Activated naive CD4-positive, alpha-beta T cell treated with anti-CD3 and anti-CD28 coated beads for 36 hours (primary cell): ENCODE measurements at regions of chr11 and their contacts with region 1.

Region 1: GRCh38 chr11:9613118-9613829 is 39.8 kb downstream of the WEE1 start:
- DNase-seq: peak; percentile 94
- H3K4me3 Mint-ChIP-seq: peak overlapping the region; percentile 86
- H3K27ac Mint-ChIP-seq: peak overlapping the region; percentile 98
- H3K4me1 Mint-ChIP-seq: peaks cover 38% of the 10 kb centered on the region
- H3K27me3 Mint-ChIP-seq: no peaks in the 10 kb centered on the region

Region 2: DNA sequence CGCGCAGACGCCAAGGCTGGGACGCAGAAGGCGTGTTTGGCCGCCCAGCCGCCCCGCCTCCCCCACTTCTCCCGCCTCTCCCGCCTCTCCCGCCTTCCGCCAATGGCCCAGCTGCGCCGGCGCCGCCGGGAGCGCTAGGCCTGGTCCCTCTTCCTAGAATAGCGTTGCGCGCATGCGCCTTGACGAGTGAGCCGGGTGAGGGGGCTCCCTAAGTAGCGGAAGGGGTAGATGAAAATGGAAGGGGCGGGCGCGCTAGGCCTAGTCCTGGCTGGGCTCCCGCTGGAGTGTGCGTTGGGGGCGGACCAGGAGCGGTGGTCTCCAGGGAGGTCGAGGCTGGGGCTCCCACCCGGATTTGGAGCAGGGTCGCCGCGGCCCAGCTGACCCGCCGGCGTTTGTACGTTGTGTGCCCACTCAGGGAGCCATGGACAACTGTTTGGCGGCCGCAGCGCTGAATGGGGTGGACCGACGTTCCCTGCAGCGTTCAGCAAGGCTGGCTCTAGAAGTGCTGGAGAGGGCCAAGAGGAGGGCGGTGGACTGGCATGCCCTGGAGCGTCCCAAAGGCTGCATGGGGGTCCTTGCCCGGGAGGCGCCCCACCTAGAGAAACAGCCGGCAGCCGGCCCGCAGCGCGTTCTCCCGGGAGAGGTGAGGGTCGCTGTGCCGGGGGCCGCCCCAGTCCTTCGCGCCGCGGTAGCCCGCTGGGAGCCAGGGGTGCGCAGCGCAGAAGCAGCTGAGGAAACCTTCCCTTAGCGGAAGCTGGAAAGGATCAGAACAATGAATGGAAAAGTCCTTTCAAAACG is 702.0 kb before region 1 on chr11 and contains the start of gene AKIP1:
- CTCF ChIA-PET with region 1: no interaction called
- intact Hi-C with region 1: loop called (anchors 5 kb)
- DNase-seq: peak; percentile 91
- H3K4me3 Mint-ChIP-seq: peak within 1 kb of the TSS; percentile 92
- H3K27ac Mint-ChIP-seq: peak within 1 kb of the TSS; percentile 86
- H3K4me1 Mint-ChIP-seq: peaks cover 44% of the 10 kb centered on the region
- H3K27me3 Mint-ChIP-seq: no peaks in the 10 kb centered on the region
- total RNA-seq, gene AKIP1: 41.5 to 43.9 TPM

Region 3: DNA sequence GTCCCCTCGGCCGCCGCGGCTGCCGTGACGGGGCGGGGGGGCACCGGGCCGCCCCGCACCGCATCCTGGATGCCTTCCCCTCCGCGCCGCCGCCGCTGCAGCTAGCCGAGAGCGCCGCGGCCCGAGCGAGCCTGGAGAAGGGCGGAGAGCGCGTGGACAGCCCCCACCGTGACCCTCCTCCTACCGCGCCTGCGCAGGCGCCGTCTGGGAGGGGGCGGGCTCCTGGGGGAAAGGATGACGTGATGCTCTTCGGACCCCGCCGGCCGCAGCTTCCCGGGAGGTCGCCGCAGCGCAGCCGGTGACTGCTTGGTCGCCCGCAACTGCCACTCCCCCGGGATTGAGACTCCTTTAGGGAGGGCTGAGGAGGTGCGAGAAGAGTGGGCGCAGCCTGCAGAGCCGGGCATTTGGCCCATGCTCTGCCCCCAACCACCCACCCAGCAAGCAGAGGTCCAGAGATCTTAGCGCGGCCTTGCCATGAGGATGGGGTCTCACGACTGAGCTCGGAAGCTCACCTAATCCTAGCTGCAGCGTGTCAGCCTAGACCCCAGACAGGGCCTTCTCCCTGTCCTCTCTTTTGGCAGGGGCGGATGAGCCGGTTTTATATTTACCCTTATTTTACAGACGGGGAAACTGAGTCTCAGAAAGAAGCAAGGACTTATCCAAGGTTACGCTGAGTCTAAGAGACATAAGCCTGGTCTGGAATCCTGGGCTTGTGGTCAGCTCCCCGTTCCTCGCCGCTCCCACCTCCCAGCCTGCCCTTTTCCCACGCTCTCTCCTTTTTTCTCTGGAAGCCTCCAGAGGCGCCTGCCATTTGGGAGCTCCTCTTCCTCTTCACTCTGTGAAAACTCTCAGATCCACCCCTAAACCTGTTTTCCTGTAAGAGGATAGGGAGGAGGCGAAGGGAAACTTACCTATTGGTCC is 347.8 kb before region 1 on chr11 and contains the start of gene DENND5A:
- CTCF ChIA-PET with region 1: no interaction called
- intact Hi-C with region 1: loop called (anchors 2 kb)
- DNase-seq: peak; percentile 62
- H3K4me3 Mint-ChIP-seq: peak within 1 kb of the TSS; percentile 84
- H3K27ac Mint-ChIP-seq: peak within 1 kb of the TSS; percentile 95
- H3K4me1 Mint-ChIP-seq: peaks cover 30% of the 10 kb centered on the region
- H3K27me3 Mint-ChIP-seq: peaks cover 3% of the 10 kb centered on the region
- total RNA-seq, gene DENND5A: 62.3 to 63.5 TPM

Region 4: GRCh38 chr11:9498457-9499078 is 114.7 kb before region 1 on chr11:
- CTCF ChIA-PET with region 1: no interaction called
- intact Hi-C with region 1: no loop called
- DNase-seq: no peak
- H3K4me3 Mint-ChIP-seq: no peak overlapping the region
- H3K27ac Mint-ChIP-seq: no peak overlapping the region
- H3K4me1 Mint-ChIP-seq: no peaks in the 10 kb centered on the region
- H3K27me3 Mint-ChIP-seq: no peaks in the 10 kb centered on the region

Region 5: GRCh38 chr11:9565822-9566560 is 47.3 kb before region 1 on chr11:
- CTCF ChIA-PET with region 1: interaction called, 3 read pairs
- intact Hi-C with region 1: loop called (anchors 1 kb)
- DNase-seq: peak; percentile 81
- H3K4me3 Mint-ChIP-seq: no peak overlapping the region
- H3K27ac Mint-ChIP-seq: peak overlapping the region; percentile 65
- H3K4me1 Mint-ChIP-seq: peaks cover 9% of the 10 kb centered on the region
- H3K27me3 Mint-ChIP-seq: no peaks in the 10 kb centered on the region

Region 6: GRCh38 chr11:9663699-9664275 is 50.5 kb after region 1 on chr11 and contains the start of gene SWAP70:
- CTCF ChIA-PET with region 1: no interaction called
- intact Hi-C with region 1: loop called (anchors 1 kb)
- DNase-seq: peak; percentile 72
- H3K4me3 Mint-ChIP-seq: peak within 1 kb of the TSS; percentile 85
- H3K27ac Mint-ChIP-seq: peak within 1 kb of the TSS; percentile 53
- H3K4me1 Mint-ChIP-seq: peaks cover 17% of the 10 kb centered on the region
- H3K27me3 Mint-ChIP-seq: peaks cover 35% of the 10 kb centered on the region
- total RNA-seq, gene SWAP70: 8.2 to 9.5 TPM

Region 7: GRCh38 chr11:9701799-9702198 is 88.5 kb after region 1 on chr11:
- CTCF ChIA-PET with region 1: no interaction called
- intact Hi-C with region 1: no loop called
- DNase-seq: no peak
- H3K4me3 Mint-ChIP-seq: no peak overlapping the region
- H3K27ac Mint-ChIP-seq: no peak overlapping the region
- H3K4me1 Mint-ChIP-seq: peaks cover 19% of the 10 kb centered on the region
- H3K27me3 Mint-ChIP-seq: no peaks in the 10 kb centered on the region

Region 8: DNA sequence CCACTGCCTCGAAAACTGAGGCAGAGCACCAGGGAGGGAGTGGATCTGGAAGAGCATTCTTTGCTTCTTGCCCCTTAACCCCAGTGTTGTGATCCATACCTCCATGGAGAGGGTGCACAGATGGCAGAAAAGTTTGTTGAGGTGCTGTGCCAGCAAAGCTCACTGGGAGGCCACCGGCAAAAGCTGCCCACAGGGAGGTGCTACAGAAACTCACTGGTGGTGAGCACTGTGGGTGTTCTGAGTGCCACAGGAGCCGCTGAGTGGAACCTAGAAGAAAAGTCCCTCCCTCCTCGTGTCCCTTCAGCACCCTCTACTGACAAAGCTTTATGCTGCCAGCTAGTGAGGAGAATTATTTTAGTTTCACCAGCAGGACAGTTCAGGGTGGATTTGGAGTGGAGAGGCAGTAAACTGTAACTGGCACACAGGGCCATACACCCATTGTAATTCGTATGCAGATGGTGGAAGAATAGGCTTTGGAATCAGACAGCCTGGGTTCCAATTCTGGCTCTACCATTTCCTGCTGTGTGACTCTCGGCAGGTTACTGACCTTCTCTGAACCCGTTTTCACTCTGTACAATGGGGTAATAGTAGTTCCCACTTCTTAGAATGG is 135.2 kb after region 1 on chr11:
- CTCF ChIA-PET with region 1: interaction called, 48 read pairs
- intact Hi-C with region 1: loop called (anchors 1 kb)
- DNase-seq: peak; percentile 77
- H3K4me3 Mint-ChIP-seq: no peak overlapping the region
- H3K27ac Mint-ChIP-seq: no peak overlapping the region
- H3K4me1 Mint-ChIP-seq: peaks cover 8% of the 10 kb centered on the region
- H3K27me3 Mint-ChIP-seq: no peaks in the 10 kb centered on the region

Region 9: GRCh38 chr11:9972989-9973388 is 359.7 kb after region 1 on chr11:
- CTCF ChIA-PET with region 1: no interaction called
- intact Hi-C with region 1: loop called (anchors 2 kb)
- DNase-seq: peak; percentile 54
- H3K4me3 Mint-ChIP-seq: no peak overlapping the region
- H3K27ac Mint-ChIP-seq: no peak overlapping the region
- H3K4me1 Mint-ChIP-seq: no peaks in the 10 kb centered on the region
- H3K27me3 Mint-ChIP-seq: no peaks in the 10 kb centered on the region

Region 10: DNA sequence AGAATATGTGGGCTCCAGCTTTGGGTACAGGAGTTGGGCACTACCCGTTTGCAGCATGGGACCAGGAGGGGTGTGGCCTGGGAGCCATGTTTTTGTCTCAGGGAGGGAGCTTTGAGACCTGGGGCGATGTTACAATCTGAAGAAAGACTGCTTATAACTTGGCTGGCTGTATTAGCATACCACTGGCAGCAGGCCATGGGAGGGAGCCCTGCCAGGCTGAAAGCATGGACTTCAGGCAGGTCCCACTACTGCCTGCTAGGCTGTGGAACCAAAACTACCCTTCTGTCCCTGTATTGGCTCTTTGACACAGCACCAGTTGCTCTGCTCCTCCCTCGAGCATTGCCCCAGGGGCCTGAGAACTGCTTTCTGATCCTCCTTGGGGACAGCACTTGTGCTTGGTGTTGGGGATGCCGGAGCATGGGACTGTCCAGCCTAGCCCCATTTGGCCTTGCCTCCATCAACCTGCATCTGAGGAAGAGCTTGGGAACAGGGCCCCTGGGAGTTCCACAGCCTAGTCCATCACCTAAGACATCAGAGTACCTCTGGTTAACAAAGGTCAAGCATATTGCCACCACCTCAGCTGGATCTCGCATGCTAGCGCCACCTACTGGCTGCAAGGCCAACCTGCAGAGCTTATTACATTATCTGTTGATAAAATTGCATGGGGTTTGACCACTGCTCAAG is 463.3 kb after region 1 on chr11:
- CTCF ChIA-PET with region 1: no interaction called
- intact Hi-C with region 1: no loop called
- DNase-seq: peak; percentile 49
- H3K4me3 Mint-ChIP-seq: no peak overlapping the region
- H3K27ac Mint-ChIP-seq: no peak overlapping the region
- H3K4me1 Mint-ChIP-seq: no peaks in the 10 kb centered on the region
- H3K27me3 Mint-ChIP-seq: no peaks in the 10 kb centered on the region